Activated CD8-positive, alpha-beta T cell treated with anti-CD3 and anti-CD28 coated beads for 36 hours (primary cell): ENCODE measurements at regions of chr18 and their contacts with region 1.

Region 1: DNA sequence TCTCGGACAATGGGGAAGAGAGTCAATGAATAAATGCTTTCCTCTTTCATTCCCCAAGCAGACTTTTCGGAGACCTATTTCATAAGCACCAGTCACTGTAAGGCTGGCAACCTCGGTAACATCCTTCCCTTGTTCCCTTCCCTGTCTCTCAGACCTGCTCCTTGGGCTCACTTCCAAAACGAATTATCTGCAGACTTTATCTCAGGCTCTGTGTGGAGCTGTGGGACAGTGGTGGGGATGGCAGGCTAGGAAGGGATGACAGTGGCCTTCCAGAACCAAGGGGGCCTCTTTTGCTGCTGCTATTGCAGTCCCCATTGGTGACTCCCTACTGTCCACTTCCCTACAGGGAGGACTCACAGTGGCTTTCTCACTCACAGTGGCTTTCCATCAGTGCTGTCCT is 185.6 kb upstream of the MEX3C start:
- DNase-seq: no peak
- ATAC-seq: no peak
- H3K4me3 Mint-ChIP-seq: no peak overlapping the region
- H3K27ac Mint-ChIP-seq: no peak overlapping the region
- H3K4me1 Mint-ChIP-seq: no peaks in the 10 kb centered on the region
- H3K27me3 Mint-ChIP-seq: no peaks in the 10 kb centered on the region
- CTCF ChIP-seq: no peak

Region 2: GRCh38 chr18:51107082-51107481 is 276.0 kb before region 1 on chr18:
- CTCF ChIA-PET with region 1: interaction called, 4 read pairs
- POLR2A ChIA-PET with region 1: no interaction called
- intact Hi-C with region 1: loop called (anchors 10 kb)
- DNase-seq: peak; percentile 17
- ATAC-seq: peak; percentile 31
- H3K4me3 Mint-ChIP-seq: no peak overlapping the region
- H3K27ac Mint-ChIP-seq: peak overlapping the region; percentile 75
- H3K4me1 Mint-ChIP-seq: peaks cover 17% of the 10 kb centered on the region
- H3K27me3 Mint-ChIP-seq: no peaks in the 10 kb centered on the region
- CTCF ChIP-seq: no peak